ENCODE measurements at regions of chr14 and their contacts with region 1.

Region 1: DNA sequence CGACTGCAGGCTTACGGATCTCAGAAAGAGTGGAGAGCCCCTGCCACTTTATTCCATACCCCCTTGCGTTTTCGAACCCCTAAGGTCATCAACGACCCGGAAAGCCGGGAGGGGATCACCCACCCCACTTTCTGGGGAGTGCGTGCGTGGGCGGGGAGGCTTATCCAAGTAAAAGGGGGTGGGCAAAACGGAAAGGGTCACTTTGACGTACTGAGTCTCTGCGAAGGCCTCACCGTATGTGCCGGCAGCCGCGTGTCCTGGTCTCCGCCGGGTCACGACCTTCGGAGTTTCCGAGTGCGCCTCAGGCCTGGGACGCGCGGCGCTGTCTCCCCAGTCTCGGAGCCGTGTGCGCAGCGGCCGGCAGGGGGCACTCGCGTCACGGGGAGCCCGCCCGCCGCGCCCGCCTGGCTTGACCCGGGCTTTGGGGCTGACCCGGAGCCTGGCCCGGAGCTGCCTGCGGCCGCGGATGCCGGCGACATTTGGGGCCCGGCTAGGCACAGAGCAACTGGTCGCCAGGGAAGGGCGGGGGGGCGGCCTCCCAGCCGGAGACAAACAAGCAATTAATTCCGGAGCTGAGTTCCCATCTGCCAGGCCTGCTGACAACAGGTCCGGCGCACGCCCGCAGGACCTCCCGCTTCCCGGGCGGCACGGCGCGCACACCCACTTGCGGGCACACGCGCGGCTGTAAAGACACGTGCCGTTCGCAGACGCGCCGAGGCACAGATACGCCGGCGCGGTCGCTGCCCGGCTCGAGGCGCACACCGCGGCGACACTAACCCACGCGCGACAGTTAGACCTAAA is 890 bp upstream of the KIF26A start:
- DNase-seq: peak; percentile 67 to 80
- ATAC-seq: peak; percentile 80 to 89 (median 84)
- H3K4me3 ChIP-seq: peak overlapping the region; percentile 19 to 72 (median 64)
- H3K27ac ChIP-seq: peak overlapping the region; percentile 41 to 90 (median 84)
- H3K4me1 ChIP-seq: peaks cover 15 to 59% (median 40%) of the 10 kb centered on the region in 9 donors
- H3K27me3 ChIP-seq: peaks cover 11 to 82% (median 50%) of the 10 kb centered on the region in 7 donors
- CTCF ChIP-seq: peak; percentile 87 to 98 (median 92)

Region 2: GRCh38 chr14:104224506-104225277 is 87.2 kb after region 1 on chr14:
- intact Hi-C with region 1: loop called in 3 of 10 experiments (anchors 2 to 5 kb)
- DNase-seq: peak in 1 of 2 donors; percentile 59
- ATAC-seq: peak in 4 of 8 donors; percentile 28 to 62 (median 46)
- H3K4me3 ChIP-seq: peak overlapping the region in 3 of 10 donors; percentile 29 to 43 (median 33)
- H3K27ac ChIP-seq: no peak overlapping the region
- H3K4me1 ChIP-seq: peaks cover 0 to 35% (median 11%) of the 10 kb centered on the region in 9 donors
- H3K27me3 ChIP-seq: peaks cover 0 to 51% (median 25%) of the 10 kb centered on the region in 7 donors
- CTCF ChIP-seq: peak; percentile 31 to 73 (median 56)

Region 3: DNA sequence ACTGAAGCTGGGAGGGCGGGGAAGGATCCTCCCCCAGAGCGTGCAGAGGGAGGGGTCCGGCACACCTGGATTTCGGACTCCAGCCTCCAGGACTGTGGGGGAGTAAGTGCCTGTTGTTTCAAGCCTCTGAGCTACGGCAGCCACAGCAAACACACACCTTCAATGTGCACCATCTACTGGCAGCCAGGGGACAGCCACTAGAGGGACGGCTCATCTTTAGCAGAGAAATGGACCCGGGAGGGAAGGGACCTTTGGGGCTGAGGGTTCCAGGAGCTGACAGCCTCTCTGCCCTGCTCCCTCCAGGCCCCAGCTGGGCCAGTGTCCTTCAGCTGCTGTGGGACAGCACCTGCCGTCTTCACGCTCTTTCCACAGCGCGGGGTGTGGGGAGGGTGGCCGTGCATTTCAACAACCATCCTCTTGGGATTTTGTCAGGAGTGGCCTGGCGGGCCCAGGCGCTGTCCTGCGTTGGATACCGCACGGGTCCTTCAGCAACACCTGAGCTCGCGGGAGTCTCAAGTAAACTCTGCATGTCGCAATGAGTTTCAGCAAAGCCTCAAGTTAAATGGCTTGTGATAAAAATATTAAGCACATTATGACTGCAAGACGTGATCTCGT is 232.9 kb after region 1 on chr14:
- intact Hi-C with region 1: loop called in 4 of 10 experiments (anchors 5 to 10 kb)
- DNase-seq: peak; percentile 9 to 27
- ATAC-seq: peak; percentile 23 to 86 (median 74)
- H3K4me3 ChIP-seq: no peak overlapping the region
- H3K27ac ChIP-seq: no peak overlapping the region
- H3K4me1 ChIP-seq: no peaks in the 10 kb centered on the region
- H3K27me3 ChIP-seq: peaks cover 0 to 33% (median 10%) of the 10 kb centered on the region in 7 donors
- CTCF ChIP-seq: peak; percentile 12 to 70 (median 57)

Region 4: GRCh38 chr14:104436047-104436591 is 298.6 kb after region 1 on chr14:
- intact Hi-C with region 1: loop called in 1 of 10 experiments (anchors 5 kb)
- DNase-seq: peak; percentile 82 to 86
- ATAC-seq: peak; percentile 80 to 93 (median 88)
- H3K4me3 ChIP-seq: peak overlapping the region in 9 of 10 donors; percentile 16 to 46 (median 39)
- H3K27ac ChIP-seq: peak overlapping the region in 9 of 10 donors; percentile 41 to 87 (median 75)
- H3K4me1 ChIP-seq: peaks cover 7 to 26% (median 17%) of the 10 kb centered on the region in 9 donors
- H3K27me3 ChIP-seq: no peaks in the 10 kb centered on the region
- CTCF ChIP-seq: peak in 3 of 9 donors; percentile 9 to 12 (median 10)

Region 5: DNA sequence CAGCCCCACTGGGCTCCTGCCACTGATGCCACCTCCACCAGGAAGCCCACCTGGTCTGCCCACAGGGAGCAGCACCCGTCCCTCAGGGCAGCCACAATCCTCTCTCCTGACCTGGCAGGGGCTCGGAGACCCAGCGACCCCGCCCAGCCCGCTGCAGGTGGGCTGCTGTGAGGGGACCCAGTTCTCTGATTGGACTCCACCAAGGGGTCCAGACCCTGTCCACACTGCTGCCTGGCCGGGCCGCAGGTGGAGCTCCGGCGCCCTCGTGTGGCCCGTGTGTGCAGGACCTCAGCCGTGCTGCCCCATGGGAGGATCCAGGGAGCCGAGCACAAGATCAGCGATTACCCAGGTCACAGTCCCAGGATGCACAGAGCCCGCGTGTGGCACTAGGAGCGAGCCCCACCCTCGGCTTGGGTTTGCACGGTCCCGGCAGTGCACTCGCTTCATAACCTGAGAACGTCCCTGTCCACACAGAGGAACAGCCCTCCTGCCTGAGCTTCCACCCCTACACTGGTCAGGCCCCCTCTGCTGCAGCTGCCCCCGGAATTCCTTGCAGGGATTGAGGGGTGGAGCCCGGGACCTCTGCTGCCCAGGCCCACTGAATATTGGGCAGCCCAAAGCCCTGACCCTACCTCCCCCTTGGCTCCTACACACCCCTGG is 502.5 kb after region 1 on chr14:
- intact Hi-C with region 1: loop called (anchors 2 to 5 kb)
- DNase-seq: peak; percentile 48 to 62
- ATAC-seq: peak; percentile 77 to 95 (median 86)
- H3K4me3 ChIP-seq: no peak overlapping the region
- H3K27ac ChIP-seq: no peak overlapping the region
- H3K4me1 ChIP-seq: peaks cover 0 to 16% (median 4%) of the 10 kb centered on the region in 9 donors
- H3K27me3 ChIP-seq: peaks cover 0 to 46% (median 20%) of the 10 kb centered on the region in 7 donors
- CTCF ChIP-seq: peak; percentile 75 to 94 (median 92)